ENCODE measurements at regions of chrX and their contacts with region 1.

Region 1: DNA sequence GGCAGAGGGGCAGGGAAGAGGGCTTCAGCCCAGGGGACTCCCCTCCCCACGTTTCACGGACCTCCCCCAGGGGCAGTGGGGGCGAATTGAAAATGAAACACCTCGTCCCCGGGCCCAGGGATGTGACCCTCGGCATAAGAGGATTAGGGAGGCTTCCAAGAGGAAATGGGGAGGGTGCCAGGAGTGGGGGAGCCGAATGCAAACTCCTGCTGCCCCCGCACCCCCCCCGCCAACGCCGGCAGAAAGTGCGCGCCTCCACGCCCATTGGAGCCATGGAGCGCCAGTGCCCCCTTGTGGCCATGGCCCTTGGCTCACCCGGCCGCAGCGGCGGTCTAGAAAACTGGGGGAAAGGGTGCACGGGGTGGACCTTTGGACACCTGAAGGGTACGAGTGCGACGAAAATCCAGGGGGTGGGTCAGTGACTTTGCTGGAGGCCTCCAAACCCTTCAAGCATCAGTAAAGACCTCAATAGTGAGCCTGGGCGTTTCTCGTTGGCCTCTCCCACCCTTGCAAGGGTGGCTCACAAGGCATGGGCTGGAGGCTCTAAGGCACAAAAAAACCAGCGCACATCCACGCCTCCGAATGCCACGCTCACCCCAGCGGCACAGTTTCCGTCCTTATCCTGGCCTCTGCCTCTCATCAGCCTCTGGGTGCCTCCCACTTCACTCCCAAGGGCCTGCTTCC is 120.8 kb upstream of the PJA1 start:
- DNase-seq: peak; percentile 66
- ATAC-seq: peak; percentile 58
- H3K4me3 Mint-ChIP-seq: peak overlapping the region; percentile 61
- H3K27ac Mint-ChIP-seq: no peak overlapping the region
- H3K4me1 Mint-ChIP-seq: peaks cover 19% of the 10 kb centered on the region
- H3K27me3 Mint-ChIP-seq: peaks cover 65% of the 10 kb centered on the region
- CTCF ChIP-seq: peak; percentile 61

Region 2: DNA sequence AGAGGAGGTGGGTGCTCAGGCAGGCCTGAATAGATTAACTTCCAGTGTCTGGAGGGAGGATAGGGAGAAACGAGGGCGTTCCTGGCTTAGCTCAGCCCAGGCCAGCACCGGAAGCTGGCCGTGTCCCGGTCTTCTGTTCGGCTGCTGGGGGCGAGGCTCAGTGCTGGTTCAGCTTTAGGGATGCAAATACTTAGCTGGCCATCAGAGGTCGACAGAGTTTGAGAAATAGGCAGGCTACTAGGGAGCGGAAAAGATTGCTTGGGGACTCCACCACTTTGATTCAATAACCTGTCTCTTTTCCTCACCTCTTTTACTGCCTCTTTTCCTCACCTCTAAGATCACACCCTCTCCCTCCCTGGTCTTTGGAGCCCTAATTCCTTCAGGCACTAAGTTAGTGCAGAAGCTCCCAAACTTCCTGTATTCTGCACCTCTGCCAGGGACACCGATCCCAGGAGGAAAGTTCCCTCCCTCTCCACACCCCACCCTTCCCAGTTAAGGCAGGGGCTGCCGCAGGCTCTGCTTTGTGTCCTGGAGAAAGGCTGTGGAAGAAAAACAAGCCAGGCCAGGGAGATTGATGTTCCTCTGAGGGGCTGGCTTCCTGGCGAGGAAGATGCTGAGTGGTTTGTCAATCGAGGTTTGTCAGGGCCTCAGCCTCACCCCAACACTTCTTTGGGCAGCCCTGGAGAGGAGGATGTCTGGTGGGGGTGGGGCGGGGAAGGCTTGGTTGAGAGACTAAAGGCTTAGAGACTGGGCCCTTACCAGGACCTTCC is 463.2 kb before region 1 on chrX:
- CTCF ChIA-PET with region 1: interaction called, 43 read pairs
- POLR2A ChIA-PET with region 1: interaction called, 3 read pairs
- DNase-seq: no peak
- ATAC-seq: peak; percentile 96
- H3K4me3 Mint-ChIP-seq: no peak overlapping the region
- H3K27ac Mint-ChIP-seq: no peak overlapping the region
- H3K4me1 Mint-ChIP-seq: 0 out of 2 replicates have a peak, but pooled peaks cover 2% of the 10 kb centered on the region
- H3K27me3 Mint-ChIP-seq: peaks cover 56% of the 10 kb centered on the region
- CTCF ChIP-seq: no peak

Region 3: GRCh38 chrX:69268611-69269010 is 17.4 kb before region 1 on chrX:
- CTCF ChIA-PET with region 1: interaction called, 16 read pairs
- POLR2A ChIA-PET with region 1: no interaction called
- DNase-seq: no peak
- ATAC-seq: no peak
- H3K4me3 Mint-ChIP-seq: no peak overlapping the region
- H3K27ac Mint-ChIP-seq: no peak overlapping the region
- H3K4me1 Mint-ChIP-seq: peaks cover 5% of the 10 kb centered on the region
- H3K27me3 Mint-ChIP-seq: peaks cover 91% of the 10 kb centered on the region
- CTCF ChIP-seq: no peak

Region 4: DNA sequence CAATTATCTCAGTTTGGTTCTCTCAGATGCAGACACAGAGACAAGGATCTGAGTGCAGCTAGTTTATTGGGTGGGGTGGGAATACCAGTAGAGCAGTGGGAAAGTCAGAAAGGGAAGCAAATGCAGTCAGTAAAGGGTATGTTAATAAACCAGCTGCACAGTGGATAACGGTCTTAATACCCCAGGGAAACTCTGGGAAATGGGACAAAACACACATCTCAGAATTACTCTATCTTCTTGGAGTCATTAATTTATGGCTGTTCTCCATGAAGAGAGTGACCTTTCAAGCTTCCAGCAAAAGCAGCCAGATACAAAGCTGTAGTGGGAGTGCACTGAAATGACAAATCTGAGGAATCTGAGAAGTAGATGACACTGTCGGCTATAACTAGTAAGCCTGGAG is 144.8 kb after region 1 on chrX:
- CTCF ChIA-PET with region 1: no interaction called
- POLR2A ChIA-PET with region 1: no interaction called
- DNase-seq: no peak
- ATAC-seq: no peak
- H3K4me3 Mint-ChIP-seq: no peak overlapping the region
- H3K27ac Mint-ChIP-seq: no peak overlapping the region
- H3K4me1 Mint-ChIP-seq: 0 out of 2 replicates have a peak, but pooled peaks cover 8% of the 10 kb centered on the region
- H3K27me3 Mint-ChIP-seq: peaks cover 3% of the 10 kb centered on the region
- CTCF ChIP-seq: no peak